Panc1 (cell line): ENCODE measurements at regions of chr3 and their contacts with region 1.

Region 1: DNA sequence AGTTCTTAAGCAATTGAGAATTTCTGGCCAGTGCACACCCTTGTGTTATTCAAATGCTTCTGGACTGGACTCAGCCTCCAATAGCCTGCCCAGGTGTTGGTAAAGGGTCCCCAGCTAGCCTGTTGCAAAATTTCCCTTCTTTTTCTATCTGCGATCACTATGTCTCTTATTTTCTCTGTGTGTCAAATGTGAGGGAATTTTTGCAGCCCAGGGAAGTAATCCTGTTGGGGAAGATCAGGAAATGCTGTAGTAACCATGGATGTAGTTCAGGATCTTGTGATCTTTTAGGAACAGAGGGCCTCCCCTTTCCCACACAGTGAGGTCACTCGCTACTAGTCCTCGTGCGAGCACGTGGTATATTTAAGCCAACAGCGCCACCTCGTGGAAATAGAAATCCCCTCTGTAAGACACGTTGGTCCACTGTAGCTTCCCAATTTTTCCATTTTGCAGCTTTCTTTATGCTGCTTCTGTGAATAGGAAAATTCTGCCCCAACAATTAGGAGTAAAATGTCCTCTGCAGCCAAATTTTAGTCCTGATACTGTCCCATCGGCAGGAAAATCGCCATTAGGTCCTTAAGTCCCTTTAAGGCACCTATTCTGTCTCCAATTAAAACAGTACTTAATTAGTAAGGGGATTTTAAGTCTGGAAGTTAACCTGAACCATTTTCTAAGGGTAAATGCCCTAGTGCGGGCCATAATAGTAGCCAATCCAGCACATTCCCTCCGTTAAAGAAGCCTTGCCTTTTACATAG is 4.0 kb upstream of the SMCO1 start:
- DNase-seq: no peak
- ATAC-seq: peak; percentile 95
- H3K4me3 ChIP-seq: no peak overlapping the region
- H3K27ac ChIP-seq: no peak overlapping the region
- H3K4me1 ChIP-seq: no peaks in the 10 kb centered on the region
- H3K27me3 ChIP-seq: no peaks in the 10 kb centered on the region
- CTCF ChIP-seq: peak; percentile 87

Region 2: GRCh38 chr3:196134691-196135090 is 384.5 kb before region 1 on chr3:
- CTCF ChIA-PET with region 1: interaction called, 11 read pairs
- POLR2A ChIA-PET with region 1: no interaction called
- in situ Hi-C with region 1: no loop called
- intact Hi-C with region 1: no loop called
- DNase-seq: no peak
- ATAC-seq: no peak
- H3K4me3 ChIP-seq: no peak overlapping the region
- H3K27ac ChIP-seq: no peak overlapping the region
- H3K4me1 ChIP-seq: 0 out of 2 replicates have a peak, but pooled peaks cover 3% of the 10 kb centered on the region
- H3K27me3 ChIP-seq: no peaks in the 10 kb centered on the region
- CTCF ChIP-seq: no peak

Region 3: GRCh38 chr3:196219194-196219978 is 299.8 kb before region 1 on chr3:
- CTCF ChIA-PET with region 1: interaction called, 10 read pairs
- POLR2A ChIA-PET with region 1: no interaction called
- in situ Hi-C with region 1: no loop called
- intact Hi-C with region 1: no loop called
- DNase-seq: no peak
- ATAC-seq: 0 out of 2 replicates have a peak, but pooled peaks have one; percentile 16
- H3K4me3 ChIP-seq: peak overlapping the region in 1 of 2 experiments; percentile 12; a peak in 1 of 4 replicates
- H3K27ac ChIP-seq: no peak overlapping the region
- H3K4me1 ChIP-seq: peaks cover 4% of the 10 kb centered on the region
- H3K27me3 ChIP-seq: no peaks in the 10 kb centered on the region
- CTCF ChIP-seq: no peak

Region 4: DNA sequence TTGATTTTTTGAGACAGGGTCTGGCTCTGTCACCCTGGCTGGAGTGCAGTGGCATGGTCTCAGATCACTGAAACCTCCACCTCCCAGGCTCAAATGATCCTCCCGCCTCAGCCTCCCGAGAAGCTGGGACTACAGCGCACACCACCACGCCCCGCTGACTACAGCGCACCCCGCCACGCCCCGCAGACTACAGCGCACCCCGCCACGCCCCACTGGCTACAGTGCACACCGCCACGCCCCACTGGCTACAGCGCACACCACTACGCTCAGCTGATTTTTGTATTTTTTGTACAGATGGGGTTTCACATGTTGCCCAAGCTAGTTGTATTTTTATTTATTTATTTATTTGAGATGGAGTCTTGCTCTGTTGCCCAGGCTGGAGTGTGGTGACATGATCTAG is 267.2 kb before region 1 on chr3:
- CTCF ChIA-PET with region 1: interaction called, 7 read pairs
- POLR2A ChIA-PET with region 1: no interaction called
- in situ Hi-C with region 1: no loop called
- intact Hi-C with region 1: loop called (anchors 1 kb)
- DNase-seq: no peak
- ATAC-seq: no peak
- H3K4me3 ChIP-seq: no peak overlapping the region
- H3K27ac ChIP-seq: no peak overlapping the region
- H3K4me1 ChIP-seq: no peaks in the 10 kb centered on the region
- H3K27me3 ChIP-seq: no peaks in the 10 kb centered on the region
- CTCF ChIP-seq: no peak

Region 5: DNA sequence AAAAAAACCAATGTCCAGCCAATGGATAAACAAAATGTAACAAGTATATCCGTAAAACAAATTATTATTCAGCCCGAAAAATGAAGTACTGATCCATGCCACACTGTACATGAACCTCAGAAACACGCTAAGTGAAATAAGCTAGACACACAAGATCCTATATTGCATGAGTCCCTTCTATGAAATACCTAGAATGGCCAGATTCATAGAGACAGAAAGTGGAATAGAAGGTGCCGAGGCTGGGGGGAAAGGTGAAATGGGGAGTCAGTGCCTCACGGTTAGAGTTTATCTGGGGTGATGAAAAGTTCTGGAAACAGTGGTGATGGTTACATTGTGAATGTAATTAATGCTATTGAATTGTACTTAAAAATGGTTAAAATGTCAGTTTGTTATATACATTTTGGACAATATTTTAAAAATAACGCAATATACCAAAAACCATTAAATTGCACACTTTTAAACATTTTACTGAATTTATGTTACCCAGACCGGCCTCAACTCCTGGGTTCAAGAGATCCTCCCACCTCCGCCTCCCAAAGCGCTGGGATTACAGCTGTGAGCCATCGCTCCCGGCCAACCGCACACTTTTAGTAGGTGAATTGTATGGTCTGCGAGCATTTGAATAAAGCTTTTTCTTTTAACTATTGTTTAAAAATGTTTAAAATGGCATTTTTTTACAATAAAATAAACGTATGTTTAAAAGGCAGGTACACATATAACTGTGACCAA is 17.7 kb before region 1 on chr3:
- CTCF ChIA-PET with region 1: interaction called, 17 read pairs
- POLR2A ChIA-PET with region 1: no interaction called
- in situ Hi-C with region 1: no loop called
- intact Hi-C with region 1: no loop called
- DNase-seq: no peak
- ATAC-seq: no peak
- H3K4me3 ChIP-seq: peak overlapping the region; percentile 64 to 100
- H3K27ac ChIP-seq: peak overlapping the region; percentile 96
- H3K4me1 ChIP-seq: peaks cover 17% of the 10 kb centered on the region
- H3K27me3 ChIP-seq: no peaks in the 10 kb centered on the region
- CTCF ChIP-seq: no peak

Region 6: DNA sequence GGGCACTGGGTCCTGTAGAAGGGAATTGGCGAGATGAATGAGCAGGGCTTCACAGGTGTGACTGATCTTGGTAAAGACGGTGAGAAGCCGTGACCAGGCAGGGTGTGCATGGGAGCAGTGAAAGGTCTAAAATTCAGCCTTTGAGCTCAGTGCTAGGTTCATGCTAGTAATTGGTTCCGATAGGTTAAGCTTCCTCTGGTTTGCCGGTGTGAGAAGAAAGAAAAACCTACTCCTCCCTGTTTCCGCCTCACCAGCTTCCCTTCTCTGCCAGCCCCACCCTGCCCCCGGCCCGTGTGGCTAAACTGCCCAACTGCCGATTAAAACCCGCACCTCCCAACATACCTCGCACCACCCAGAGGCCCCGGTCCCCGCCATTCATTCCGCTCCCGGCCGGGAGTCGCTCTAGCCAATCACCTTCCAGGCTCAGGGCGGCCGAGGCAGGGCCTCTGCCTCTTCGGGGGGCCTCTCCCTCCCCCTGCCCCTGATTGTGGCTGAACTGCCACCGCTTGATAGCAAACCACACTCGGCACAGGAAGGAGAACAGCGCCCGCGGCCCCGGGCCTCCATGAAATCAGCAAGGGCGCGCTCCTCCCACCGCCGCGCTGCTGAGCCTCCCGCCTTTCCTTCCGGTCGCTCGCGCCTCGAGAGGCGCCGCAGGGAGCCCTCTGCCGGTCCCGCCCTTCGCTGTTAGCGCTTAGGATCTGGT is 113.1 kb after region 1 on chr3:
- CTCF ChIA-PET with region 1: no interaction called
- POLR2A ChIA-PET with region 1: no interaction called
- in situ Hi-C with region 1: no loop called
- intact Hi-C with region 1: no loop called
- DNase-seq: no peak
- ATAC-seq: peak; percentile 89
- H3K4me3 ChIP-seq: peak overlapping the region; percentile 56 to 88
- H3K27ac ChIP-seq: peak overlapping the region; percentile 94
- H3K4me1 ChIP-seq: peaks cover 31% of the 10 kb centered on the region
- H3K27me3 ChIP-seq: no peaks in the 10 kb centered on the region
- CTCF ChIP-seq: no peak; the same call in 1 of the 2 replicates